ENCODE measurements at regions of chr18 and their contacts with region 1.

Region 1: DNA sequence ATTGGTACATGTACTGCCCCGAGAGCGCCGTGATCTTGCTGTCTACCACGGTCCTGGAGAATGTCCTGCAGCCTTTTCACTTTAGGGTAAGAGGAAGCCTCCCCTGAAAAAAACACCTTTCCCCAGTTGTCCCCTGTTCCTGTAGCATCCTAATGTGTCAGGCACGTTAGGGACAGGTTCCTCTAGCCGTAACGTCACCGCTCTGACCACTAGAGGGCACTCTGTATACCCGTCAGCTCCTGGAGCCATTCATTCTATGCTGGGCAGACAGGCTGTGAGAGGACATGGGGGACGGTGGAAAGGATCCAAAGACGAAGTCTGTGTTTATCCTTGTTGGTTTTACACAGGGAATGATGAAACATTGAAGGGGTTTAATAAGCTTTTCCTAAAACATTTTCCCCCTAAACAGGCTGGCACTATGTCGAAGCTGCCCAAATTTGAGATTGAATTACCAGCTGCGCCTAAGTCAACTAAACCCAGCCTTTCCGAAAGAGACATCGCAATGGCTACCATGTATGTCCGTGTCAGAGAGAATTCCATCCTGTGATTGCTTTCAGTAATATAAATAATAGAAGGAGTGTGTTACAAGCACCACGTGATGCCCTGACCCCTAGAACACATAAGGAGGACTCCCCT is 12.7 kb downstream of the RMC1 start:
- DNase-seq: no peak
- H3K4me3 ChIP-seq: no peak overlapping the region
- CTCF ChIP-seq: peak; percentile 93

Region 2: DNA sequence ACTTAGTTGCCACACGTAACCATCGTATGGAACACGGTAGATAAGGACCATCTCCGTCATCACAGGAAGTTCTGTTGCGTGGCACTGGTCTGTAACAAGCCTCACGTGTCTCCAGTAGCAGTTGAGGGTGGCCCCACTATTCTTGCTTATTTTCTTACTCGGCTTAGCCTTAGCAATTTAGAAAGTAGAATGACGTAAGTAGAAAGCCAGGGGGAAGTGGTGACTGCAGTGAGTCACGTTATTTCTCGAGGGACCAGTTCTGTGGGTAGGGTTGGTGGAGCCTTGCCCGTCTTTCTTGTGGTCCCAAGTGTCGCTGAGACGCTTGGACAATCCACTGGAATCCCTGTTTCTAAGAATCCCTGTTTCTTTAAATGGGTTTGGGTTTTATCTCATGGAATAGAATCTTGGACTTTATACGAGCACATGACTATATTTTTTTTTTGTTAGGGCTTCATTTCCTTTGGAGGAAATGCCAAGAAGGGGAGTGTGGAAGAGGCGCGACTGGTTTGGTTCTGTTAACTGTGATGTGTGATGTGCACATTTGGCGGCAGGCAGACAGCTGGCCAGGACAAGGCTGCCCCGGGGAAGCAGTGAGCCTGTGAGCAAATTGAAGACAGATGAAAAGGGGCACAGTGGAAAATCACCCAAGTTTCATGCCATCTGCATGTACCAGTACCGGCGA is 284.5 kb before region 1 on chr18:
- CTCF ChIA-PET with region 1: no interaction called
- POLR2A ChIA-PET with region 1: no interaction called
- DNase-seq: peak; percentile 96
- H3K4me3 ChIP-seq: no peak overlapping the region
- CTCF ChIP-seq: no peak

Region 3: DNA sequence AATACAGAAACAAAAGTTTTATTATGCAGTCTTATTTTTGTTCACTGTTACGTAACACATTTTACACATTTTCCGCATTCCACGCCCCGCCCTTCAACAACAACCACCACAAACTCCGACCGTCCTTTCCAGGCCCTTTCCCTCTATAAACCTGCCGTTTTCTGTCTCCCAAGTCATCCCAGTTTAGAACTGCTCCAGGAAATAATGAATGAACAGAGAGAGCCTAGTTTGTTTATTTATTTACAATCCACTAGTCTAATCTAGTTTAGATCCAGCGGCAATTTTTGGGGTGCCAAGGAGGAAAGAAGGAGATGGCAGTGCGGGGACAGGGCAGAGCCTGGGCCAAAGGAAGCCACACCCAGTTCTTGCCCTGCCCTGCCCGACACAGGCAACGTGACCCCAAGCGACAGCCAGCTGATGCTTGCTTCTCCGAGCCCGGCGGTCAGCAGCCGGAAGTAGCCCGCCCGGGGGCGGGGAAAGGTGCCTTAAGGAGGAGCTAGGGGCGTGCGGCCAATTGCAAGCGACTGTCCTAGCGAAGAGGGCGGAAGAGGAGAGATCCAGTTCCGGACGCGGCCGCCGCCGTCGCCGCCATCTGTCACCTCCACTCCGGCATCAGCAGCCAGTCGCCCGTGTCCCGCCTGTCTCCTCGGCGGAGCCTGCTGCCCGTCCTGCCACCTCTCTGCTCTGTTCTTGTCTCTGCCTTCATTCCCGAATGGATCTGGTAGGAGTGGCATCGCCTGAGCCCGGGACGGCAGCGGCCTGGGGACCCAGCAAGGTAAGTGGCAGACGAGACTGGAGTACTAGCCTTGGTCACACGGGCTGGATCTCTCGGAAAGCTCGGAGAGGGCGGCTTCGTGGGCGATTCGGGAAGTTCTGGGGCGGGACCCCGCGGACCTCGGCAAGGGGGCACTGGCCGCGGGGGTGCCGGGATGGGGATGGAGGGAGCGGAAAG is 63.0 kb before region 1 on chr18 and contains the start of gene RIOK3:
- CTCF ChIA-PET with region 1: interaction called, 10 read pairs
- POLR2A ChIA-PET with region 1: interaction called, 3 read pairs
- DNase-seq: peak; percentile 71
- H3K4me3 ChIP-seq: peak within 1 kb of the TSS; percentile 100
- CTCF ChIP-seq: no peak

Region 4: GRCh38 chr18:23529597-23529996 is 13.6 kb after region 1 on chr18:
- CTCF ChIA-PET with region 1: interaction called, 17 read pairs
- POLR2A ChIA-PET with region 1: no interaction called
- DNase-seq: no peak
- H3K4me3 ChIP-seq: no peak overlapping the region
- CTCF ChIP-seq: no peak

Region 5: GRCh38 chr18:23553887-23554286 is 37.9 kb after region 1 on chr18:
- CTCF ChIA-PET with region 1: interaction called, 13 read pairs
- POLR2A ChIA-PET with region 1: no interaction called
- DNase-seq: no peak
- H3K4me3 ChIP-seq: no peak overlapping the region
- CTCF ChIP-seq: no peak

Region 6: DNA sequence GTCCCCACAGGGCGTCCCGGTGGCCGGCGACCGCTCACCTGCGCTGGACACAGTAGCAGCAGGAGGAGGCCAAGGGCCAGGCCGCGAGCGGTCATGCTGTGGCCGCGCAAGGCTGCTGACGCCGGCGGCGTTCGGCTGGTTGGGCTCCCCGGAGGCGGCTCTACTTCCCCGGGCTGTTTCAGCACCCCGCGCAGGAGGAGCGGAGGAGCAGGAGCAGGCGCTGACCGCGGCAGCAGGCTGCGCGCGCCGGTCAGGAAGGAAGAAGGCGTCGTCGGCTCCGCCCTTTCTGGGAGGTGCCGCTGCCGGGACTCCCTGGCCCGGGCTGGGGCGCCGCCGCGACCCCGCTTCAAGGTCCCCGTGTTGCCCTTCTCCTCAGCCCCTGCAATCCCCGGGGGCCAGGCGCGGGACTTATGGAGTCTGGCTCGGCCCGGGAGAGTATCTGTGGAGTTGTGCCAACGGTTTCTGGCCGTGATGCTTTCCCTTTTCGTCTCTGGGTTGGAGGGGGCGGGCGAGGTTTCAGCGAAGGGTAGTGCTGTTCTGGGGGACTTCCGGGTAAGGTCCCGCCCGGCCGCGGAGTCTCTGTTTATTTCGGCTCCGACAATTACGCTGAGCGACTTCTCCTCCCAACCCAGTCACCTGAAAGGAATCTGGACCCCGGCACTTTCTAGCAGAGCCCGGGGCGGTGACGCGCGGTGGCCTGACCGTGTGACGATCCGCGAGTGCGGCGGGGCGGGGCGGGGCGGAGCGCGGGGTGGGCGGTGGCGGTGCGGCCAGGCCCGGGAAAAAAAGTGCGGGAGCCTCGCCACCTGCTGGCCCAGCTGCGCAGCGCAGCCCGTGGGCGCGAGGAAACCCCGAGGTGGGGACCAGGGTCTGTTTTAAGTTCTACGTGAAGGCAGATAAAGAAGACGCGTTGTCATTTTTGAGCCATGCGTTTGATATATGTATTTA is 70.5 kb after region 1 on chr18 and contains the start of gene NPC1:
- CTCF ChIA-PET with region 1: interaction called, 32 read pairs
- POLR2A ChIA-PET with region 1: no interaction called
- DNase-seq: no peak
- H3K4me3 ChIP-seq: peak within 1 kb of the TSS; percentile 90
- CTCF ChIP-seq: peak; percentile 92

Region 7: GRCh38 chr18:23912356-23912755 is 396.3 kb after region 1 on chr18:
- CTCF ChIA-PET with region 1: no interaction called
- POLR2A ChIA-PET with region 1: no interaction called
- DNase-seq: no peak
- H3K4me3 ChIP-seq: no peak overlapping the region
- CTCF ChIP-seq: no peak